Left colon (tissue), 2 donors: ENCODE measurements at regions of chr10 and their contacts with region 1.

Region 1: DNA sequence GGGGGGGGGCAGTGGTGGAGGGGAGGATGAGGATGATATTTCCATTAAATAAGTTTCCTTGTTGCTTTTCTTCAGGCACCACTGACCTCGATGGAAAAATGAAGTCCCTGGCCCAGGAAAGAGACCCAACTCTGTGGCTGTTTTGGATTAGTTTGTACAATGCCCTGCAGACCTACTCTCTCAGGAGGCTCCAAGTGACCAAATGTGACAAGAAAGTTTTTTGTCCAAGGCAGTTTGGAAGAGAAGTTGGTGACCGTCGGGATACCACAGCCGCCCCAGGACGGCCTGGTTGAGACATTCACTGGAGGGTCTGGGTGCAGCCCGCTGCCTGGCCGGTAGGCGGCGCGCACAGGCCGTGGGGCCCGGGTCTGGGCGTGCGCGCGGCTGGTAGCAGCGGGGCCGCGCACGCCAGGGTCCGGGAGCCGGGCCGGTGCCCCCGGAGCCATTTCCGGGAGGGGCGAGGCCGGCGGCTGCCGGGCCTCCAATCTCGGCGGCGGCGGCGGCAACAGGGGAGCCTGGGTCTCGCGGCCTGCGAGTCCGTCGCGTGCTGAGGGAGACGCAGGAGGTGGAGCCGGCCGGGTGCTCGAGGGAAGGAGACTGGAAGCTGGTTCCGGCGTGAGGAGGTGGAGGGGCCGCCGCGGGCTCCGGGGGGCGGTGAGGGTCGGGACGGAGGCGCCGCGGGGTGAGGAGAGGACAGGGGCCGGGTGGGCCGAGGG is at the start of gene SGPL1:
- DNase-seq: peak; percentile 75 to 92
- ATAC-seq: peak; percentile 92
- total RNA-seq, gene SGPL1: 68.8 to 82.2 TPM

Region 2: DNA sequence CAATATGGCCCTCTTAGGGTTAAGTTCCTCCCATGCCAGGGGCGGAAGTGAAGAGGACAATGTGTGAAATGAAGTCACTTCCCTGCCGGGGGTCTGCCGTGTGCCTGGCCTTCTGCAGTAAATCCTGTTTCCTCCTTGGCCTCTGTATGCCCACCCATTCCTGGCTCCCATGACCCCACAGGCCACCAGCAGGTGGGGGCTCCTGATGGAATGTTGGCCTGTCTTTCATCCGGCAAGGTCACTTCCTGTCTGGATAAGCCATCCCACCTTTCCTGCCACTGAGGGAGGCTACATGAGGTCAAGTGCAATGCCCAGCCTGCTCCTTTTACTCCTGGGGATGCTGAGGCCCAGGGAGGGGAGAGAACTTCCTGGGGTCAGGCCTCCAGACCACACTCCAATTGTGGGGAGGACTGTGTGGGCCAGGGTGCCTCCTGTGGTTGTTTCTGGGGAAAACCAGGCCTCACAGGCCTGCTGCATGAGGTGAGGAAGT is 314.8 kb before region 1 on chr10:
- intact Hi-C with region 1: no loop called
- DNase-seq: no peak
- ATAC-seq: no peak

Region 3: GRCh38 chr10:70679498-70679897 is 136.2 kb before region 1 on chr10:
- intact Hi-C with region 1: no loop called
- DNase-seq: no peak
- ATAC-seq: no peak

Region 4: DNA sequence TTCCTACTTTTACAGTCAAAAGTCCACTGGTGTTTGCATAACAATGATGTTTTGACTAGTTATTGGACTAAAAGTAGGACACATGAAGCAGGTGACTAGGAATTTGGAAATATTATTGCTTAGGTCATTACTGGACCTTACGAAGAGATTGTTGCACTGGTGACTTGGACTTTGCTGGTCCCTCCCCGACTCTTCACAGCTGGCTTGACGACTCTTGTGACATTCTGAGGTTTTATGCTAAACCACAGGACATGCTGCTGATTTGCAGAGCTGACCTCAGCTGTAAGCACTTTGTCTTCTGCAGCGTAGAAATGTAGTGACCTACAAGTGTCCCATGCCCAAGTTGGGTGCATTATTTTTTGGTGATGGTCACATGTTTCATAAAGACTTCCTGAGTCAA is 50.8 kb after region 1 on chr10:
- intact Hi-C with region 1: loop called in 1 of 2 experiments (anchors 5 kb)
- DNase-seq: no peak
- ATAC-seq: peak; percentile 18

Region 5: GRCh38 chr10:70880077-70880534 is 64.4 kb after region 1 on chr10:
- intact Hi-C with region 1: loop called (anchors 5 kb)
- DNase-seq: peak; percentile 70 to 84
- ATAC-seq: peak; percentile 93